IMR-90 (cell line): ENCODE measurements at regions of chr1 and their contacts with region 1.

Region 1: DNA sequence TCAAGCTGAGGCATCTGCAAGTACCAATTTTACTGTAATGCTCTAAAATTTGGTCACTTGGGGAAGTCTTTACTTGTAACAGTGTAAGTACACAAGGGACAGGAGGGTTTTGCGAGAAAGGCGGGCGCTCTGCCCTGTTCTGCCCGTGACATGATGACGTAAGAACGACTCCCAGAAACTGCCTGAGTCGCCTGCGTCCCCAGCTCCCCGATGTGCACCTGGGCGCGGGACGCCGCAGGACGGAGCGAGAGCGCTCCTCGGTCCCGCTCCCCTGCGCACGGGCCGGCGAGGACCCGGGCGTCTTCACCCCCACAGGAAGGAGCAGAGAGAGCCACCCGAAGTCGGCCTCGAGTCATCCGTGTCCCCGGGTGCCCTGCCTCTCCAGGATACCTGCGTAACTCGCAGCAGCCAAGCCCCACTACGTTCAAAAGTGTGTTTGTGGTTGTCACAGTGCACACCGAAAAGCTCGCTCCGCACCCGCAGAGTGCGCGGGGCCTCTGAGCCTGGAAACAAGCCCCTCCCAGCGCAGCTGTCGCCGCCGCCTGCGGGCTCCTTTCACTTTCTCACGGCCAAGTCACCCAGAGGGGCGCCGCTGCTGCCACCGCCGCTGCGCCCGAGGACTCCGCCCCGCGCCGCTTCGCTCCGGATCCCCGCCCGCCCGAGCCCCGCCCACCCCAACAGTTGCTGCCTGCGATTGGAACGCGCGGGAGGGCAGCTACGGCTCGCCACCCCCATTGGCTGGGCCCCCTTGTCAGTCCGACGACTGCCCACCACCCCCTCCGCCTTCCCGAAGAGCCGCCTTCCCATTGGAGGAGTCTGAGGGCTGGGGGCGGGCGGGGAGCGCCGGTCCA is 3.2 kb upstream of the ZBTB18 start:
- DNase-seq: peak; percentile 99
- ATAC-seq: peak; percentile 97
- H3K4me3 ChIP-seq: peak overlapping the region; percentile 96
- H3K27ac ChIP-seq: peak overlapping the region; percentile 80
- H3K4me1 ChIP-seq: peaks cover 2% of the 10 kb centered on the region; the same call in 1 of the 2 replicates
- H3K27me3 ChIP-seq: peaks cover 6% of the 10 kb centered on the region
- CTCF ChIP-seq: no peak
- POLR2A ChIP-seq: peak; percentile 59; the same call in 1 of the 2 replicates
- RAD21 ChIP-seq: no peak

Region 2: DNA sequence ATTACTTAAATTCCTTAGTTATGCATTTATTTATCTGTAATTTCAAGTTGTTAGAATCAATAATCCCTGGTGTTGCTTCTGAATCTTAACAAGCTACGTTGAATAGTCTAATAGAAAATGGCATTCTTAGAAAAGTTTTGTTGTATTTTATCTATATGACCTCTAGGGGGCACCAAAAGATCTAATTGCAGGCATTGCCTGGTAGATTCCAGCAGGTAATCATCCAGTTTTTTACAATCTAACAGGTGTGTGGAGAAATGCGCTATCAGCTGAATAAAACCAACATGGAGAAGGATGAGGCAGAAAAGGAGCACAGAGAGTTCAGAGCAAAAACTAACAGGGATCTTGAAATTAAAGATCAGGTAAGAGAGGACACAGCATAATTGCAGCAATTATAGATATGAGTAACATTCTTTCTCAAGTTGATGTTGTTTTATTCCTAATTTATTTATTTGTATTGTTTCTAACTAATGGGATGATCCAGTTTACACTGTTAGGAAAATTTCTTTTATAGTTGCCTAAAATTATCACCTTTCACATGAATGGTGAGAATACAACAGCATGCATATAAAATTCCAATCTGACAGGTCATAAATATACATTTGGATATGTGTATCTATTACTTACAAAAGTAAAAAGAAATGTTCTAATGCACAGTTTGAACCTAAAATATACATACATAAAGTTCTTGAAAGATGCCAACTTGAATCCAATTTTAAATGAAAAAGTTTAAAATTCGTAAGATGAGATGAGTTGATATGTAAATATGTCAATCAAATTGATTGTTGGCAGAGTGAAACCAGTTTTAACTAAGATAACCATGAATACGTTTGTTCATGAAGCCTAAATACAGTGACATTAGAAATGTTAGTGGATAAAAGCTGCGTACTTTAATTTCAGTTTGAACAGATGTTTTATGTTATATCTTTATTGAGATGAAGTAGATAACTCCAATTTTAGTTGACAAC is 703.6 kb before region 1 on chr1:
- CTCF ChIA-PET with region 1: no interaction called
- POLR2A ChIA-PET with region 1: no interaction called
- dilution Hi-C with region 1: no loop called
- in situ Hi-C with region 1: no loop called
- intact Hi-C with region 1: loop called (anchors 5 kb)
- DNase-seq: peak; percentile 40
- ATAC-seq: peak; percentile 62; the same call in 1 of the 2 replicates
- H3K4me3 ChIP-seq: no peak overlapping the region
- H3K27ac ChIP-seq: no peak overlapping the region
- H3K4me1 ChIP-seq: no peaks in the 10 kb centered on the region
- H3K27me3 ChIP-seq: no peaks in the 10 kb centered on the region
- CTCF ChIP-seq: peak; percentile 72
- POLR2A ChIP-seq: no peak
- RAD21 ChIP-seq: peak; percentile 78

Region 3: DNA sequence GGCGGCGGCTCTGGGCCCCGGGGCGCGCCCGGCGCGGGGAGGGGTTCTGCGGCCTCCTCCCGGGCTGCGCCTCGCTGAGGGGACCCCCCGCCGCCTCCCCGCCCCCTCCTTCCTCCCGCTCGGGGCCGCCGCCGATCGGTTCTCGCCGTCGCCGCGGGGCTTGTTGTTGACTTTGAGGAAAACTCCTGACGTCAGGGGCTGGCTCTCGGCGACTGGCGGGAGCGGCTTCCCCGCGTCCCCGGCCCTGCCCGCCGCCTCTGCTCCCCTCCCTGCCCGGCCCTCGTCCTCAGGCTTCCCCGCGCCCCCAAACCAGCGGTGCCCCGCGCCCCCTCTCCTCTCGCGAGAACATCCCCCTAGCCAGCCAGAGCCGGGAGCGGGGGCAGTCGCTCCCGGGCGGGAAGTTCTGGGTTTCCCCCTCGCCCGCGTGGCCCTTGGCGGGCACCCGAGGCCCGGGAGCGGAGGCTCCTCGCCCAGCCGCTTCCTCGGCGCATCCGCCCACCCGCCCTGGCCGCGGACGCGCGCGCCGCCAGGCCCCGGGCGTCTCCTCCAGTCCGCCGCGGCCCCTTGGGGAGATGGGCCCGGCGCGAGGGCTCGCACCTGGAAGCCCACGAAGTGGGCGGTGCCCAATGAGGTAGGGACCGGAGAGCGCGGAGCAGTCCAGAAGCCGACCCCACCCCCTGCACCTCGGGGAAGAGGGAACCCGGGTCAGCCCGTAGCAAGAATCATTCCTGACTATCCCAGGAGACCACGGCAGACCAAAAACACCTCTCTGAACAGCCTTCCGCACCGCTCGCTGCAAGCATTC is 197.2 kb before region 1 on chr1:
- CTCF ChIA-PET with region 1: no interaction called
- POLR2A ChIA-PET with region 1: no interaction called
- dilution Hi-C with region 1: no loop called
- in situ Hi-C with region 1: no loop called
- intact Hi-C with region 1: loop called (anchors 1 kb)
- DNase-seq: peak; percentile 70
- ATAC-seq: peak; percentile 73
- H3K4me3 ChIP-seq: peak overlapping the region; percentile 86
- H3K27ac ChIP-seq: peak overlapping the region; percentile 78
- H3K4me1 ChIP-seq: no peaks in the 10 kb centered on the region; the same call in 1 of the 2 replicates
- H3K27me3 ChIP-seq: no peaks in the 10 kb centered on the region
- CTCF ChIP-seq: no peak
- POLR2A ChIP-seq: peak; percentile 66; the same call in 1 of the 2 replicates
- RAD21 ChIP-seq: no peak

Region 4: DNA sequence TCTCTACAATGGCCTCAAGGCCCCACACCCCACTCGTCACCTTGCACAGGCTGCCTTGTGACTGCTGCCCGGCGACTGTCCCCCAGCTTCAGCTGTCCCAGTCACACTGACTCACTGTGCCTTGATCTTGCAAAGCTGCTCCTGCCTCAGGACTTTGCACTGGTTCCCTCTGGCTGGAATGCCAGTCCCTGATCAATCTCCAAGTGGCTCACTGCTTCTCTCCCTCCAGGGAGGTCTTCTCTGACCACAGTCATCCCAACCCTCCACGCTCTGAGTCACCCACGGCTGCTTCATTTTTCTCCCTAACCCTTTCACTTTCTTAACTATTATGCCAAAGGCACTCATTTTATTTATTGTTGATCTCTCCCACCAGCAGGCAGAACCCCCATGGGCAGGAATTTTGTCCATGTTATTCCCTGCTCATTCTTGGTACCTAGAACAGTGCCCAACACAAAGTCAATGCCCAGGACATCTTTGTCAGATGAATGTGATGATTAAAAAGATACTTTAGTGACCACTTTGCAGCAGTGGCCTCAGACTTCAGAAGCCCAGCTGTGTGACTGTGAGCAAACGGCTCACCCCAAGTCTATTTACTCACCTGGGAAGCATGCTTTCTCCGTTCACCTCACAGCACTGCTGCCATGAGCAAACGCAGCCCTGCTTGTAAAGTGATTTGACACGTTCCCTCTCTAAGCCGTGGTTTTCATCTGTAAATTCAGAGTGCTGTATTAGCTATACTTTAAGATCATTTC is 56.6 kb after region 1 on chr1:
- CTCF ChIA-PET with region 1: no interaction called
- POLR2A ChIA-PET with region 1: no interaction called
- dilution Hi-C with region 1: no loop called
- in situ Hi-C with region 1: no loop called
- intact Hi-C with region 1: loop called (anchors 10 kb)
- DNase-seq: peak; percentile 93
- ATAC-seq: peak; percentile 98
- H3K4me3 ChIP-seq: no peak overlapping the region
- H3K27ac ChIP-seq: 0 out of 2 replicates have a peak overlapping the region, but pooled peaks have one; percentile 13
- H3K4me1 ChIP-seq: peaks cover 14% of the 10 kb centered on the region
- H3K27me3 ChIP-seq: no peaks in the 10 kb centered on the region; the same call in 1 of the 2 replicates
- CTCF ChIP-seq: no peak
- POLR2A ChIP-seq: no peak
- RAD21 ChIP-seq: peak; percentile 32

Region 5: GRCh38 chr1:244435562-244436205 is 387.8 kb after region 1 on chr1:
- CTCF ChIA-PET with region 1: no interaction called
- POLR2A ChIA-PET with region 1: no interaction called
- dilution Hi-C with region 1: no loop called
- in situ Hi-C with region 1: no loop called
- intact Hi-C with region 1: loop called (anchors 10 kb)
- DNase-seq: peak; percentile 71
- ATAC-seq: peak; percentile 74
- H3K4me3 ChIP-seq: no peak overlapping the region
- H3K27ac ChIP-seq: peak overlapping the region; percentile 74; the same call in 1 of the 2 replicates
- H3K4me1 ChIP-seq: peaks cover 7% of the 10 kb centered on the region
- H3K27me3 ChIP-seq: no peaks in the 10 kb centered on the region
- CTCF ChIP-seq: no peak
- POLR2A ChIP-seq: no peak
- RAD21 ChIP-seq: no peak